HepG2 (cell line): ENCODE measurements at regions of chr3 and their contacts with region 1.

Region 1: DNA sequence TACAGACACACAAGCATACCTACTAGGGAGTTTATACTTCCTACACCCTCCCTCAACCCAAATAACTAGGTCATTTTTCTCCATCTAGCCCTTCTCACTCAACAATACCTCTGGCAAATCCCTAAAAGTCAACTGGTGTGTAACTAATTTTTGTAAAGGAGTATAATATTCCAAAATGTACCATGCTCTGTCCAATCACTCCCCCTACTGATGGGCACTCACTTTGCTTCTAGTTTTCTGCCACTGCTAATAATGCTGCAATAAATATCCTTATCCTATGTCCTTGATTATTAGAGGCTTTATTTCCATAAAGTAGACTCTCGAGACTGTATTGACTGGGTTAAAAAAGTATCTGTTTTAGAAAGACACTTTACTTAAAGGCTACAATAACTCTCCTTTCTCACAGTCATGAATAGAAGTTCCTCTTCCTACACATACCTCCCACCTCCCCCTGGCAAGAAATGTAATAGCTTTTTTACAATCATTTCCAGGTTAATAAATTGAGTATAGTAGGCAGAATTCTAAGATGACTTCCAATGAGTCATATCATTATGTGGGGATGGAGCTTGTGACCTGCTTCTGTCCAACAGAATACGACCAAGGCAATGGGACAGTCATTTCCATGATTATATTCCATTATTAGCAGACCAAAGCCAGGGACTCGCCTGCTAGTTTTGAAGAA is 30.0 kb downstream of the SHQ1 start:
- DNase-seq: no peak
- ATAC-seq: peak; percentile 47; the same call in 2 of the 3 replicates
- H3K4me3 ChIP-seq: no peak overlapping the region
- H3K27ac ChIP-seq: no peak overlapping the region
- H3K4me1 ChIP-seq: peaks cover 12% of the 10 kb centered on the region
- H3K27me3 ChIP-seq: no peaks in the 10 kb centered on the region
- CTCF ChIP-seq: peak; percentile 71
- EP300 ChIP-seq: no peak
- POLR2A ChIP-seq: no peak
- RAD21 ChIP-seq: peak; percentile 57

Region 2: GRCh38 chr3:71875461-71875947 is 942.7 kb before region 1 on chr3:
- CTCF ChIA-PET with region 1: interaction called, 6 read pairs
- POLR2A ChIA-PET with region 1: no interaction called
- in situ Hi-C with region 1: no loop called
- intact Hi-C with region 1: loop called (anchors 1 kb)
- DNase-seq: peak; percentile 43
- ATAC-seq: peak; percentile 99
- H3K4me3 ChIP-seq: no peak overlapping the region
- H3K27ac ChIP-seq: no peak overlapping the region
- H3K4me1 ChIP-seq: no peaks in the 10 kb centered on the region
- H3K27me3 ChIP-seq: no peaks in the 10 kb centered on the region
- CTCF ChIP-seq: peak; percentile 91
- EP300 ChIP-seq: no peak
- POLR2A ChIP-seq: no peak
- RAD21 ChIP-seq: peak; percentile 68

Region 3: GRCh38 chr3:71955240-71956068 is 862.8 kb before region 1 on chr3:
- CTCF ChIA-PET with region 1: interaction called, 5 read pairs
- POLR2A ChIA-PET with region 1: no interaction called
- in situ Hi-C with region 1: loop called (anchors 25 kb)
- intact Hi-C with region 1: loop called (anchors 1 kb)
- DNase-seq: peak; percentile 34
- ATAC-seq: peak; percentile 85
- H3K4me3 ChIP-seq: no peak overlapping the region
- H3K27ac ChIP-seq: no peak overlapping the region
- H3K4me1 ChIP-seq: no peaks in the 10 kb centered on the region
- H3K27me3 ChIP-seq: peaks cover 0 to 4% of the 10 kb centered on the region in 2 experiments; a peak in 2 of 5 replicates
- CTCF ChIP-seq: peak; percentile 75
- EP300 ChIP-seq: no peak
- POLR2A ChIP-seq: no peak
- RAD21 ChIP-seq: peak; percentile 22; the same call in 1 of the 2 replicates

Region 4: GRCh38 chr3:72152551-72153476 is 665.4 kb before region 1 on chr3:
- CTCF ChIA-PET with region 1: no interaction called
- POLR2A ChIA-PET with region 1: no interaction called
- in situ Hi-C with region 1: no loop called
- intact Hi-C with region 1: loop called (anchors 5 kb)
- DNase-seq: peak; percentile 39
- ATAC-seq: peak; percentile 44
- H3K4me3 ChIP-seq: peak overlapping the region; percentile 66 to 84 (median 79)
- H3K27ac ChIP-seq: peak overlapping the region; percentile 96
- H3K4me1 ChIP-seq: peaks cover 60% of the 10 kb centered on the region
- H3K27me3 ChIP-seq: no peaks in the 10 kb centered on the region; a peak in 1 of 5 replicates
- CTCF ChIP-seq: no peak
- EP300 ChIP-seq: no peak
- POLR2A ChIP-seq: peak; percentile 30 to 58; a peak in 2 of 4 replicates
- RAD21 ChIP-seq: no peak

Region 5: GRCh38 chr3:72665701-72666443 is 152.4 kb before region 1 on chr3:
- CTCF ChIA-PET with region 1: interaction called, 6 read pairs
- POLR2A ChIA-PET with region 1: no interaction called
- in situ Hi-C with region 1: loop called (anchors 5 kb)
- intact Hi-C with region 1: loop called (anchors 1 kb)
- DNase-seq: no peak
- ATAC-seq: peak; percentile 81
- H3K4me3 ChIP-seq: no peak overlapping the region
- H3K27ac ChIP-seq: no peak overlapping the region
- H3K4me1 ChIP-seq: peaks cover 18% of the 10 kb centered on the region
- H3K27me3 ChIP-seq: no peaks in the 10 kb centered on the region
- CTCF ChIP-seq: peak; percentile 53
- EP300 ChIP-seq: no peak
- POLR2A ChIP-seq: no peak
- RAD21 ChIP-seq: peak; percentile 54